ENCODE measurements at regions of chr4 and their contacts with region 1.

Region 1: GRCh38 chr4:153083447-153083947 is 120.7 kb upstream of the TRIM2 start:
- DNase-seq: peak; percentile 64
- H3K4me3 Mint-ChIP-seq: no peak overlapping the region
- H3K27ac Mint-ChIP-seq: peak overlapping the region; percentile 50
- H3K4me1 Mint-ChIP-seq: peaks cover 57% of the 10 kb centered on the region
- H3K27me3 Mint-ChIP-seq: peaks cover 57% of the 10 kb centered on the region

Region 2: GRCh38 chr4:152843481-152844090 is 239.9 kb before region 1 on chr4:
- CTCF ChIA-PET with region 1: interaction called, 41 read pairs
- DNase-seq: no peak
- H3K4me3 Mint-ChIP-seq: no peak overlapping the region
- H3K27ac Mint-ChIP-seq: no peak overlapping the region
- H3K4me1 Mint-ChIP-seq: peaks cover 30% of the 10 kb centered on the region
- H3K27me3 Mint-ChIP-seq: no peaks in the 10 kb centered on the region

Region 3: DNA sequence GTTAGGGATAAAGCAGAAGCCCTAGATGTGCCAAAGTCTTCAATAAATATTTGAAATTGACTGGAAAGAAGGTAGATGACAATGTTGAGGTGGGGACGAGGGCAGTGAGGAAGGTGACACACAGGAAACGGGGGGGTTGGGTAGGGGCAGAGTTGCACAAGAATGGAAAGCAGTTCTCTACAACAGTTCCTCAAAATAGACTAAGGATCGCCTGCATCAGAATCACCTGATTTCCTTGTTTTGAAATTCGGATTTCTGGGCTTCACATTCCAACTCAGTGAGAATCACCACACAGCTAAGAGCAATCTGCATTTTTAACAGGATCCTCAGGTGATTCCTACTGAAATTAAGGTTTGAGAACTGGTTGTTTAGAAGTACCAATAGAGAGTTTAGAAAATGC is 233.1 kb before region 1 on chr4:
- CTCF ChIA-PET with region 1: interaction called, 41 read pairs
- DNase-seq: peak; percentile 55
- H3K4me3 Mint-ChIP-seq: no peak overlapping the region
- H3K27ac Mint-ChIP-seq: no peak overlapping the region
- H3K4me1 Mint-ChIP-seq: peaks cover 20% of the 10 kb centered on the region
- H3K27me3 Mint-ChIP-seq: no peaks in the 10 kb centered on the region

Region 4: GRCh38 chr4:153095448-153096204 is 12.1 kb after region 1 on chr4:
- CTCF ChIA-PET with region 1: interaction called, 17 read pairs
- DNase-seq: no peak
- H3K4me3 Mint-ChIP-seq: no peak overlapping the region
- H3K27ac Mint-ChIP-seq: no peak overlapping the region
- H3K4me1 Mint-ChIP-seq: peaks cover 5% of the 10 kb centered on the region
- H3K27me3 Mint-ChIP-seq: peaks cover 22% of the 10 kb centered on the region

Region 5: DNA sequence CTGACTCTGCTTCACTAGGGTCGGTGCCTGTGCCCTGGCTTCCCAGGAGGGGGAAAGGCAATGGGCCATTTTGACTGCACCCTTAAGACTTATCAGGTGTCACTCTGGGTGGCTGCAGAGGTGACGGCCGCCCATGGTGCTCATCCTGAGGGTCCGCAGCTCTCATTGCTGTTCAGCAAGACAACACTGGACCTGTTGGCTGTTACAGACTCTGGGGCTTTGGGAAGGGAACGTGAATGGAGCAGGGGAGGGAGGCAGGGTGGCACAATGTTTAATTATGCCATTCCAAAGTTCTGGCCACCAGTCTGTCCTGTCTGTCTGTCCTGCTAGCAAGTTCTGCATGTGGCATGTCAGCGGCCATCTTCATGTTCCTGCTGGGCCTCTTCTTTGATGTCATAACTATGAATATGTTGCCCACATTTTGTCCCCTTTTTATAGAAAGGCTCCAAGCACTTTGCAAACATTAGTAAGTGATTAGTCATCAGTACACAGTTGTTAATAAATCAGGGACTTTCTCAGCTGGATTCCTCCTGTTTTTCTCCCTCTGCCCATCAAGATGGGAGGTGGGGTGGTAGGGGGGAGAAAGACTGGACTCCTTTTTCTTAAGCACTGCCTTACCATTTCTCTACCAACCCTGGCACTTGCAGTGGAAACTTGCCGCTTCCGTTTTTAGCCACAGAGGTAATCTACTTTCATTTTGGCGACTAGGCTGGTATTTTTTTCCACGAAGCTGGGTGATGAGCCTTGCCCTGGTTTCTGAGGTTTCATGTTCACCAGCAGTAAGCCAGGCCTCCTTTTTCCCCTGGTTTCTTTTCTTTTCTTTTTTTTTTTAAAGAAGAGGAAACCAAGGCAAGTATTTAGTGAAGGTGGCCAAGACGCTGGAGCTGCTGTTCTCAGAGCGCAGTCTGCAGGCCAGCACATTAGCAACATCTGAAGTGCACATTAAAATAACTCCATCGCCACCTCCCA is 32.1 kb after region 1 on chr4:
- CTCF ChIA-PET with region 1: interaction called, 25 read pairs
- DNase-seq: peak; percentile 86
- H3K4me3 Mint-ChIP-seq: peak overlapping the region; percentile 49
- H3K27ac Mint-ChIP-seq: no peak overlapping the region
- H3K4me1 Mint-ChIP-seq: peaks cover 2% of the 10 kb centered on the region
- H3K27me3 Mint-ChIP-seq: peaks cover 5% of the 10 kb centered on the region

Region 6: GRCh38 chr4:153127760-153128494 is 44.4 kb after region 1 on chr4:
- CTCF ChIA-PET with region 1: interaction called, 239 read pairs
- DNase-seq: peak; percentile 90
- H3K4me3 Mint-ChIP-seq: no peak overlapping the region
- H3K27ac Mint-ChIP-seq: no peak overlapping the region
- H3K4me1 Mint-ChIP-seq: peaks cover 6% of the 10 kb centered on the region
- H3K27me3 Mint-ChIP-seq: peaks cover 26% of the 10 kb centered on the region